ENCODE measurements at regions of chr1 and their contacts with region 1.

Region 1: DNA sequence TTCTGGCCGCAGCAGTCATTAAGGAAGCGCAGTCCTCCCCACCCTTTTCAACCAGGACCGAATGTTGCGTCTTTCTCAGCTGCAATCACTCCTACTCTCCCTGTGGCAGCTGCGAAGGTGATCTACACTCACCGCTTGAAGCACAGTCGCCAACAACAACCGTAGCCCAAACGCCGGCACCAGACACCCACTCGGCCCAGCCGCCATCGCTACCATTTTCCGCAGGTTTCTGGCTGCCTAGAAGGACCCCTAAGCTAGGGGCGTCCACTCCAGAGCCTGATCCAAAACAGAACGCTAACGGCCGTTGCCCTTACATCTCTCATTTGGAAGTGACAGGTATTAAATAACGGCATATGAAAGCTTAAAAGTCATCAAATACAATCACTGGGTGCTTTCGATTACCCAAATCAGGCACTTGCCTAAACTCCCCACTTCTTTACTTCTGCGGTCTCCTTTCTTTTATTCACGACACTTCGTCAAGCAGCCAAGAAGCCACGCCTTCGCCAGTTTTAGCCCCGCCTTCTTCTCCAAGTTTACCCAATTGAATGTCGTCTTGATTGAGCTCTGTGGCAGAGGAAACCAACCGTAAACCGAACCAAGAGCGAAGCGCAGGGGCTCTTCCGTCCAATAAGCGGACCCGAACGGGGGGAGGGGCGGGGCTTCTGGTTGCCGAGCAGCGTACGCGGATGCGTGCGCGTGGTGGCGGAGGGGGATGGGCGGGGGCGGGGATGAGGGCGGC is at the start of gene SELENOF:
- DNase-seq: peak; percentile 100
- H3K4me3 Mint-ChIP-seq: no peak within 1 kb of the TSS
- H3K27ac Mint-ChIP-seq: peak within 1 kb of the TSS; percentile 53
- H3K4me1 Mint-ChIP-seq: peaks cover 47% of the 10 kb centered on the region
- H3K27me3 Mint-ChIP-seq: no peaks in the 10 kb centered on the region
- total RNA-seq, gene SELENOF: 111 to 115 TPM

Region 2: DNA sequence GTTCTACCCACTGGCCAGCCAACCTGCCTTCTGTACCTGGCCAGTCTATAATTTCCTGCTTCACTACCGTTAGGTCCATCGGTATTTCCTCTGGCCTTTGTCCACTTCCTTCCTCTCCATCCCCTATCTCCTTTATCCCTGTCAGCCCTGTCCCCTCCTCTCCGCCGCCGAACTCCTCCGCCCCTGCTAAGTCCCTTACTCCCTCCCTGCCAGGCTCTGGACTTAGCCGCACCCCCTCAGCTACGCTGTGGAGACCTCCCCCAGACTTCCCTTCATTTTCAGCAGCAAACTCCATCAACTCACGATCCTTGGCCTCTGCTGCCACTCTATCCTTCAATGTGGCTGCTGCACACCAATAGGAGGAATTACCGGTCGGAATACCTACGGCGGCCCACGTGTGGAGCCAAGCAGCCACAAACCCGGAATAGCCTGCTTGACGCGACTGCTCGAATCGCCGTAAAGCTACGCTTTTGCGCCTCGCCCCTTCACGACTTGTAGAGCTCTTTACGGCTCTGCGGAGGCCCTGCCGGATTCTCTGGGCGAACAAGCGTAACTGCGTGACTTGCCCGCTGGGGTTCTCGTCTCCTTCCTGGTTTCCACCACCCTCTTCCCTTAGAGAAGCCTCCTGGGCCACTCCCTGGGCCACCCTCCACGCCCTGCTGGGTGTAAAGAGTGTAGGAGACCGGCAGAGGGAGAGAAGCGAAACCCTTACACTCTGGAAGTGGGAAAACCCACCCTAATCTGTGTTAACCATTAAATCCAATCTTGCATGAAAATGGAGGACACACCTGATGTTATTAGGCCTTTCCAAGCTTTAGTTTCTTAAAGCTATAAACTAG is 1205.9 kb before region 1 on chr1 and contains the start of gene ZNHIT6:
- CTCF ChIA-PET with region 1: no interaction called
- intact Hi-C with region 1: loop called (anchors 2 kb)
- DNase-seq: peak; percentile 93
- H3K4me3 Mint-ChIP-seq: no peak within 1 kb of the TSS
- H3K27ac Mint-ChIP-seq: no peak within 1 kb of the TSS
- H3K4me1 Mint-ChIP-seq: peaks cover 21% of the 10 kb centered on the region
- H3K27me3 Mint-ChIP-seq: no peaks in the 10 kb centered on the region
- total RNA-seq, gene ZNHIT6: 19.8 to 19.9 TPM

Region 3: DNA sequence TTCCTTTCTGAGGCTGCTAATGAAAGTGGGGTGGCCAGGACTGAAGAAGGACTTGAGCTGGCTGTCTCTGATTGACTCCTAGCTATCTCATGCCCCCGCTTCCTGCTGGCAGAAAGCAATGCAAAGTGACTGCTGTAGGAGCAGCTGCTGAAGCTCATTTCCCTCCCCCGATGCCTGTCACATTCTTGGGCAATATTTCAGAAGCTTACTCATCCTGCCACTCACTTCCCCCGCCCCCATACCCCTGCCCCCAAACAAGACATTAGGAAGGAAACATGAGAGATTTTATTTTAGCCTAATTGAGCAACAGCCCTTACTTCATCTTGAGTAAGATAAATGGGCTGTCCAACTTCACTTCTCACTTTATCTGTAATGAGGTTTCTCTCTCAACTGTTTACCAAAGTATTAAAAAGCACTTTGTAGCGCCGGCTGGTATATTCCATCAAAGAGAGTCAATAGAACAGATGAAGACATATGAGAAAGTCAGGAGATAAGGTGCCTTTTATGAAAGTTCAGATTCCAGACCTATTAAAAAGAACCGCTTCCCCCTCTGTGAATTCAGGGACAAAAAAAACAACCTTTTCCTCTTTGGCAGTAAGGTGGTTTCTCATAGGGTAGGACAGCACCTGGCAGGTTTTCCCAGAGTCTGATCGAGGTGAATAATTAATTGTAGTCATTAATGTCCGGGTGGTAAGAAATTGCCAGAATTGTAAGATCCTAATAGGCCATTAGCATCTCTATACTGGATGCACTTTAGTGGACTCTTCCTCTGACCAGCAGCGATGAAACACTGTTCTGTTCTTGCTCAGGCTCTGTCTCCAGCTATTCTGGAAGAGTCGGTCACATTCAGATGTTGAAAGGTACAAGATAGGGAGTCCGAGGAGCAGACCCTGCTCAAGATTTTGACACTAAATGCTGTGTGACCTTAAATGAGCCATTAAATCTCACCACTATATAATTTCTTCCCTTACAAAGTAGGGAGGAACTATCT is 139.5 kb before region 1 on chr1:
- CTCF ChIA-PET with region 1: no interaction called
- intact Hi-C with region 1: loop called (anchors 1 kb)
- DNase-seq: peak; percentile 81
- H3K4me3 Mint-ChIP-seq: no peak overlapping the region
- H3K27ac Mint-ChIP-seq: peak overlapping the region; percentile 17
- H3K4me1 Mint-ChIP-seq: peaks cover 15% of the 10 kb centered on the region
- H3K27me3 Mint-ChIP-seq: no peaks in the 10 kb centered on the region

Region 4: GRCh38 chr1:86887479-86888162 is 26.4 kb before region 1 on chr1:
- CTCF ChIA-PET with region 1: interaction called, 3 read pairs
- intact Hi-C with region 1: loop called (anchors 2 kb)
- DNase-seq: no peak
- H3K4me3 Mint-ChIP-seq: no peak overlapping the region
- H3K27ac Mint-ChIP-seq: no peak overlapping the region
- H3K4me1 Mint-ChIP-seq: peaks cover 37% of the 10 kb centered on the region
- H3K27me3 Mint-ChIP-seq: no peaks in the 10 kb centered on the region

Region 5: DNA sequence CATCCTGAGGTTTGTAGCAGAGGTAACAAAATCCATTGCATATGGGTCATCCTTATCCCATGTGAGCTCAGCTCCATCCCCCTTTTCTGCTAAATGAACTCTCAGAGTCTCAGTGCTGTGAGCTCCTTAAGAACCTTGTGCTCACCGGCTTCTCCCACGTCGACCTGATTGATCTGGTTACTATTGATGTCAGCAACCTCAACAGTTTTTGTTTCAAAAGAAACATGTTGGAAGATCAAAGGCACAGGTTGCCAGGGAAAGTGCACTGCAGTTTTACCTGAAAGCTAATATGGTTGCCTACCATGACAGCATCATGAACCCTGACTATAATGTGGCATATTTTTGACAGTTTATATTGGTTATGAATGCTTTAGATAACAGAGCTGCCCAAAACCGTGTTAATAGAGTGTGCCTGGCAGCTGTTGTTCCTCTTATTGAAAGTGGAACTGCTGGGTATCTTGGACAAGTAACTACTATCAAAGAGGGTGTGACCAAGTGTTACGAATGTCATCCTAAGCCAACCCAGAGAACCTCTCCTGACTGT is 131.8 kb after region 1 on chr1:
- CTCF ChIA-PET with region 1: no interaction called
- intact Hi-C with region 1: loop called (anchors 1 kb)
- DNase-seq: peak; percentile 82
- H3K4me3 Mint-ChIP-seq: peak overlapping the region; percentile 33
- H3K27ac Mint-ChIP-seq: peak overlapping the region; percentile 79
- H3K4me1 Mint-ChIP-seq: peaks cover 45% of the 10 kb centered on the region
- H3K27me3 Mint-ChIP-seq: no peaks in the 10 kb centered on the region

Region 6: GRCh38 chr1:87115317-87115890 is 201.3 kb after region 1 on chr1:
- CTCF ChIA-PET with region 1: no interaction called
- intact Hi-C with region 1: no loop called
- DNase-seq: no peak
- H3K4me3 Mint-ChIP-seq: no peak overlapping the region
- H3K27ac Mint-ChIP-seq: no peak overlapping the region
- H3K4me1 Mint-ChIP-seq: no peaks in the 10 kb centered on the region
- H3K27me3 Mint-ChIP-seq: no peaks in the 10 kb centered on the region

Region 7: GRCh38 chr1:88891318-88891950 is 1977.4 kb after region 1 on chr1 and contains the start of gene GTF2B:
- CTCF ChIA-PET with region 1: no interaction called
- intact Hi-C with region 1: loop called (anchors 1 kb)
- DNase-seq: peak; percentile 97
- H3K4me3 Mint-ChIP-seq: peak within 1 kb of the TSS; percentile 82
- H3K27ac Mint-ChIP-seq: peak within 1 kb of the TSS; percentile 96
- H3K4me1 Mint-ChIP-seq: peaks cover 36% of the 10 kb centered on the region
- H3K27me3 Mint-ChIP-seq: no peaks in the 10 kb centered on the region
- total RNA-seq, gene GTF2B: 35.2 to 36.1 TPM